Transverse colon (tissue), 4 donors: ENCODE measurements at regions of chr19 and their contacts with region 1.

Region 1: GRCh38 chr19:771332-771785 is 20.4 kb downstream of the MISP start:
- DNase-seq: no peak
- H3K4me3 ChIP-seq: no peak overlapping the region
- H3K27ac ChIP-seq: no peak overlapping the region
- H3K4me1 ChIP-seq: peaks cover 0 to 4% (median 0%) of the 10 kb centered on the region in 4 donors
- H3K27me3 ChIP-seq: peaks cover 3% of the 10 kb centered on the region
- CTCF ChIP-seq: peak; percentile 30 to 48 (median 42)
- EP300 ChIP-seq: no peak
- POLR2A ChIP-seq: no peak

Region 2: DNA sequence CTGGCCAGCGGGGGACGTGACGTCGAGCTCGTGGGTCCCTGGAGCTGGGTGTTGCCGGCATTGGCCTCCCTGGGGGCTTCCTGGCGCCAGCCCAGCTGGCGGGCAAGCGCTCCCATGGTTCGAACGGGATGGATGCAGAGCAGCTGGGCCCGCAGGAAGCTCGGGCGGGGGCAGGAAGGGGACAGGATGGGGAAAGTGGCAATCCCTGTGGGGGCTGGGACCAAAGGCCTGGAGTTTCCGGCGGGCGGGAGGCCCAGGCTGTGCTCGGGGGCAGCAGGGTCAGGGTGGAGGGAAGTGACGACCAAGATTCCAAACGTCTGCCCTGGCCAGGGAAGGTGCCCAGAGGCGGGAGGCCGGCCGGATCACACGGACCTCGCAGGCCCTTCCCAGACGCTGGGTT is 43.3 kb before region 1 on chr19:
- in situ Hi-C with region 1: no loop called
- intact Hi-C with region 1: no loop called
- DNase-seq: no peak
- H3K4me3 ChIP-seq: no peak overlapping the region
- H3K27ac ChIP-seq: peak overlapping the region; percentile 24 to 48 (median 30)
- H3K4me1 ChIP-seq: no peaks in the 10 kb centered on the region
- H3K27me3 ChIP-seq: peaks cover under 1% of the 10 kb centered on the region
- CTCF ChIP-seq: no peak
- EP300 ChIP-seq: no peak
- POLR2A ChIP-seq: no peak

Region 3: GRCh38 chr19:843180-843835 is 71.9 kb after region 1 on chr19:
- in situ Hi-C with region 1: no loop called
- intact Hi-C with region 1: loop called (anchors 10 kb)
- DNase-seq: no peak
- H3K4me3 ChIP-seq: peak overlapping the region in 1 of 4 donors; percentile 18
- H3K27ac ChIP-seq: no peak overlapping the region
- H3K4me1 ChIP-seq: peaks cover 6 to 17% (median 11%) of the 10 kb centered on the region in 4 donors
- H3K27me3 ChIP-seq: peaks cover 94% of the 10 kb centered on the region
- CTCF ChIP-seq: peak in 1 of 5 experiments; percentile 17
- EP300 ChIP-seq: no peak
- POLR2A ChIP-seq: no peak

Region 4: DNA sequence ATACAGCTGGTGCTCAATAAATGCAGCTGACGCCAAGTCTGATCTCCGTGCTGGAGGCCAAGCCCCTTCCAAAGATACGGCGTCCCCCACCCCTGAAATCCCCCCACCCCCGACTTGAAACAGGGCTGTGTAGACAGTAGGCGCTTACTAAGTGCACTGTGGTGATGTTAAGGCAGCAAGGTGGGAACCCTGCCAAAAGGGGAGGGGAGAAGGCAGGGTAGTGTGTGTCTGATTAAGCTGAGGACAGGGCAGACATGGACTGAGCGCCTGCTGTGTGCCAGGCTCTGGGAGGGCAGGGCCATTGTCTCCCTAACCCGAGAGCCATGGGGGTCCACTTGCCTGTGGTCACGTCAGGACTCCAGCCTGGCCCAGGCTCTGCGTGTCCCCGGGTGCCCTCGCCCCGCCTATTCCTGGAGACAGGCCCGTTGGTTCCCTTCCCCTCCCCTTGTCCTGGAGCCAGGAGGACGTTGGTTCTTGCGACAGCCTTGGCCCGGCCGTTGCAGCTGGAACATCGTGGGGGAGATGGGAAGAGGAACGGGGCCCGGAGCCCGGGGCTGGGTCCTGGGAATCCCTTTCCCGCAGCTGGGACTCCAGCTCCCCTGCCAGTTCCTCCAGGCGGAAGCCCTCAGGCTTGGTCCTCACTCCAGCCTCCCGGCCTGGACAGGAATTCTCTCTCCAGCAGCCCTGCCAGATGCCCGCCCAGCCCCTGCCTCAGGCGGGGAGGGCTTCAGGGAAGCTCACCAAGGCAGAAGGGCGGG is 79.0 kb after region 1 on chr19:
- in situ Hi-C with region 1: loop called in 2 of 4 experiments (anchors 10 kb)
- intact Hi-C with region 1: loop called (anchors 10 kb)
- DNase-seq: peak; percentile 82
- H3K4me3 ChIP-seq: no peak overlapping the region
- H3K27ac ChIP-seq: peak overlapping the region; percentile 62 to 87 (median 78)
- H3K4me1 ChIP-seq: peaks cover 0 to 13% (median 3%) of the 10 kb centered on the region in 4 donors
- H3K27me3 ChIP-seq: peaks cover 78% of the 10 kb centered on the region
- CTCF ChIP-seq: no peak
- EP300 ChIP-seq: peak; percentile 89
- POLR2A ChIP-seq: no peak

Region 5: DNA sequence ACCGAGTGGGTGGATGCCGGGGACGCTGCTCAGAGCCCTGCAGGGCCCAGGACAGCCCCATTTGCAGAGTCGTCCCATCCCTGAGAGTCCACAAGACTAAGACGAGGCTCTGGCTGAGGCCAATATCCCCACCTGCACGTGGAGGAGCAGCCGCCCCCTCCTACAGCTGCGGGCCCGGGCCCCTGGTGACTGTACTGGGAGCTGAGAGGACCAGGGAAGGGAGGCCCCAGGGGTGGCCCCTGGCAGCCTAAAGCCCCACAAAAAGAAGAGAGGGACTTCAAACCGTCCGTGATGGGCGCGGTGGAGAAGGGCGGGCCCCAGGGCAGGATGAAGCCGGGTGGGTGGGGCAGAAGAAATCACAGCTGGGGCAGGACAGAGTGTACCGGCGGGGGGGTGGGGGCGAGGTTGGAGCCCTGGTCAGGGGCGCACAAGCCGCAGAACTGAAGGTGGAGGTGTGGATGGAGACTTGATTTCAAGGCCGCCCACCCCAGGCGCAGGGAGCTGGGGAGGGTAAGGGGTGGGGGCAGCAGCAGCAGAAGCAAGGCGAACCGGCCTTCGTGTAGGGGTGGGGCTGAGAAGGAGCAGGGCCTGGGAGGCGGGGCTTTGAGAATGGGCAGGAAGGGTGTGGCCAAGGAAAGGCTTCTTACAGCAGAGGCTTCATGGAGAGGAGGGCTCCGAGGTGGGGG is 101.0 kb after region 1 on chr19:
- in situ Hi-C with region 1: no loop called
- intact Hi-C with region 1: no loop called
- DNase-seq: peak; percentile 92
- H3K4me3 ChIP-seq: peak overlapping the region in 2 of 4 donors; percentile 13 to 26
- H3K27ac ChIP-seq: peak overlapping the region; percentile 72 to 86 (median 76)
- H3K4me1 ChIP-seq: peaks cover 12 to 25% (median 18%) of the 10 kb centered on the region in 4 donors
- H3K27me3 ChIP-seq: no peaks in the 10 kb centered on the region
- CTCF ChIP-seq: no peak
- EP300 ChIP-seq: no peak
- POLR2A ChIP-seq: no peak

Region 6: GRCh38 chr19:913080-913748 is 141.9 kb after region 1 on chr19 and contains the start of gene R3HDM4:
- in situ Hi-C with region 1: no loop called
- intact Hi-C with region 1: loop called (anchors 5 kb)
- DNase-seq: peak; percentile 89
- H3K4me3 ChIP-seq: peak within 1 kb of the TSS; percentile 89 to 99 (median 94)
- H3K27ac ChIP-seq: peak within 1 kb of the TSS; percentile 90 to 100 (median 95)
- H3K4me1 ChIP-seq: peaks cover 22 to 56% (median 42%) of the 10 kb centered on the region in 4 donors
- H3K27me3 ChIP-seq: peaks cover 22% of the 10 kb centered on the region
- CTCF ChIP-seq: no peak
- EP300 ChIP-seq: no peak
- POLR2A ChIP-seq: peak; percentile 54
- total RNA-seq, gene R3HDM4: 43.8 to 49.4 (median 46.7) TPM

Region 7: GRCh38 chr19:925526-926322 is 154.4 kb after region 1 on chr19 and contains the start of gene ARID3A:
- in situ Hi-C with region 1: loop called in 1 of 4 experiments (anchors 10 kb)
- intact Hi-C with region 1: no loop called
- DNase-seq: peak; percentile 80
- H3K4me3 ChIP-seq: peak within 1 kb of the TSS; percentile 85 to 99 (median 88)
- H3K27ac ChIP-seq: peak within 1 kb of the TSS; percentile 89 to 92 (median 91)
- H3K4me1 ChIP-seq: peaks cover 0 to 30% (median 23%) of the 10 kb centered on the region in 4 donors
- H3K27me3 ChIP-seq: peaks cover 8% of the 10 kb centered on the region
- CTCF ChIP-seq: no peak
- EP300 ChIP-seq: no peak
- POLR2A ChIP-seq: no peak
- total RNA-seq, gene ARID3A: 2.2 to 8.7 (median 4.3) TPM

Region 8: GRCh38 chr19:970695-971094 is 199.3 kb after region 1 on chr19:
- in situ Hi-C with region 1: no loop called
- intact Hi-C with region 1: loop called (anchors 10 kb)
- DNase-seq: no peak
- H3K4me3 ChIP-seq: no peak overlapping the region
- H3K27ac ChIP-seq: no peak overlapping the region
- H3K4me1 ChIP-seq: no peaks in the 10 kb centered on the region
- H3K27me3 ChIP-seq: no peaks in the 10 kb centered on the region
- CTCF ChIP-seq: peak; percentile 29 to 45 (median 43)
- EP300 ChIP-seq: no peak
- POLR2A ChIP-seq: no peak

Region 9: GRCh38 chr19:984165-984967 is 213.0 kb after region 1 on chr19 and contains the start of gene WDR18:
- in situ Hi-C with region 1: loop called in 2 of 4 experiments (anchors 10 kb)
- intact Hi-C with region 1: loop called (anchors 10 kb)
- DNase-seq: peak; percentile 94
- H3K4me3 ChIP-seq: peak within 1 kb of the TSS; percentile 69 to 100 (median 76)
- H3K27ac ChIP-seq: peak within 1 kb of the TSS; percentile 83 to 94 (median 88)
- H3K4me1 ChIP-seq: peaks cover 11 to 27% (median 22%) of the 10 kb centered on the region in 4 donors
- H3K27me3 ChIP-seq: peaks cover 2% of the 10 kb centered on the region
- CTCF ChIP-seq: peak; percentile 23 to 44 (median 35)
- EP300 ChIP-seq: no peak
- POLR2A ChIP-seq: peak; percentile 56
- total RNA-seq, gene WDR18: 23.1 to 47.4 (median 39.0) TPM